HEK293 (cell line): ENCODE measurements at regions of chr1 and their contacts with region 1.

Region 1: GRCh38 chr1:182604169-182605164 is at the start of gene RGS16:
- H3K4me3 ChIP-seq: peak within 1 kb of the TSS; percentile 26
- H3K27ac ChIP-seq: peak within 1 kb of the TSS; percentile 70
- H3K4me1 ChIP-seq: peaks cover 7% of the 10 kb centered on the region
- CTCF ChIP-seq: peak; percentile 82; the same call in 1 of the 2 replicates

Region 2: GRCh38 chr1:182588500-182589452 is 15.7 kb before region 1 on chr1 and contains the start of gene RNASEL:
- CTCF ChIA-PET with region 1: interaction called, 10 read pairs
- POLR2A ChIA-PET with region 1: no interaction called
- H3K4me3 ChIP-seq: peak within 1 kb of the TSS; percentile 61
- H3K27ac ChIP-seq: peak within 1 kb of the TSS; percentile 1; the same call in 1 of the 2 replicates
- H3K4me1 ChIP-seq: no peaks in the 10 kb centered on the region
- CTCF ChIP-seq: no peak

Region 3: GRCh38 chr1:182614796-182615454 is 10.5 kb after region 1 on chr1:
- CTCF ChIA-PET with region 1: interaction called, 7 read pairs
- POLR2A ChIA-PET with region 1: interaction called, 11 read pairs
- H3K4me3 ChIP-seq: peak overlapping the region; percentile 43
- H3K27ac ChIP-seq: peak overlapping the region; percentile 98
- H3K4me1 ChIP-seq: peaks cover 34% of the 10 kb centered on the region
- CTCF ChIP-seq: no peak

Region 4: GRCh38 chr1:182789138-182790076 is 184.9 kb after region 1 on chr1 and contains the start of gene NPL:
- CTCF ChIA-PET with region 1: interaction called, 668 read pairs
- POLR2A ChIA-PET with region 1: interaction called, 4 read pairs
- H3K4me3 ChIP-seq: peak within 1 kb of the TSS; percentile 41
- H3K27ac ChIP-seq: peak within 1 kb of the TSS; percentile 47; the same call in 1 of the 2 replicates
- H3K4me1 ChIP-seq: 0 out of 2 replicates have a peak, but pooled peaks cover 2% of the 10 kb centered on the region
- CTCF ChIP-seq: peak; percentile 46; the same call in 1 of the 2 replicates